ENCODE measurements at regions of chr9 and their contacts with region 1.

Region 1: DNA sequence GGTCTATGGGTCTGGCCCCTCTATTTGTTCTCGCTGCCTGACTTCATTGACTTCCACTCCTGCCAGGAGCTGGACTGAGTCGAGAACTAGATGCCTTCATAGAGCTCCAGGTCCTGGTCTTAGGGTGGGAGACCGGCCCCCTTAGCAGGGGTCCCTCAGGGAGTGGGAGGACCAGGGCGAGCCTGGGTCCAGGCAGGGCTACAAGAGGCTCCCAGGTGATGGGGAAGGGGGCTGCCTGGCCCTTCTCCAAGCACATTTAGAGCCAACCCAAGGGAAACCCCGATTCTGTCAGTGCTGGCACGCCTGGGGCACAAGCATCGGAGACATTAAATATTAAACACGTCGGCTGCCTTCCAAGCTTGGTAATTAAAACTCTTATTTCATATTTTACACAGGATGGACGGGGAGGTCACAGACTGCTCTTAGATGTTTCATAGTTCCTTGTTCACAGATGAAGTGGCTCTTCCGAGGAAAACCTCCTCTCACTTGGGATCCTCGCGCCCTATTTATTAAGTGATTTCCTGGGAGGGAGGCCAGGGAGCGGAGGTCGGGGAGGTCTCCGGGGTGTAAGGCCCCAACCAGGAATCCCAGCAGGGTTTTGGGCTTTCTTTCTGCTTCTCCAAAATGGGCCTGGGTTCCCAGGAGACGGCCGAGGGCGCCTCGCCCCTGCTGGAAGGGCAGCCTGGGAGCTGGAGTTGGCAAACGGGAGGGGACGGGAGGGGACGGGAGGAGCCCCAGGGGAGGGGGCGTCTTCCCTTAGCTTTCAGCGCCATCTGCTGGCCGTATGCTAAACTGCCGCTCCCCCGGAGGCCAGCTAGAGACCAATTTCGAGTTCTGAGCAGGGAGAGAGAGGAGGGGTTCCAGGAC is 23.4 kb upstream of the ZBTB43 start:
- DNase-seq: peak; percentile 85 to 96
- H3K4me3 ChIP-seq: no peak overlapping the region
- H3K4me1 ChIP-seq: peaks cover 3% of the 10 kb centered on the region; the same call in 1 of the 2 replicates
- H3K27me3 ChIP-seq: no peaks in the 10 kb centered on the region

Region 2: DNA sequence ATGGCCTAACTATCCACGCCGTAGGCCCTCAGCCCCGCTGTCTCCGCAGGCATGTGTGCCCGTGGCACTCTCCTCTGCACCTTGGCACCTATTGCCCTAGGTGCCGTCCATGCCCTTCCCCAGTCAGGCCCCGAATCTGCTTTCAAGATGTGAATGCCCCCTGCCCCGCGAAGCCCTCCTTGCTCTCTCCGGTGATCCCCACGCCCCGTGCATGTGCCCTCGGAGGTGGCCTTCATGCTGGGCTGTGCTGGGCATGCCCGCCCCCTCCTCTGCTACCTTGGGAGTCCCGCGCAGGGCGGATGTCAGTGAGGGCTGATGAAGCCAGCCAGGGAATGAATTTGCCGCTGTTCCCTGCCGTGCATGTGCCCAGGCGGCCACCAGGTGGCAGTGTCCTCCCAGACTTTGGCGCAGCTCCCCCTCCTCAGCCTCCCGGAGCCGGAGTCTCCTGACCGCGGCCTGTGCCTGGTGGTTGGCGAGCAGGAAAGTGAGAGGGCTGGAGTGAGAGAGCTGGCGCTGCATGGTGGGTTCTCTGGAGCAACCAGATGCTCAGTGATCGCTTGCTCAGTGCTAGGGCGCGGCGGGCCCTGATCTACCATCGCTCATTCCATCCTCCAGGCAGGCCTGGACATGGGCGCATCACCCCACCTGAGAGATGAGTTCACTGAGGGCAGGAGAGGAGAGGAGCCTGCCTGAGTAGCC is 280.6 kb before region 1 on chr9:
- in situ Hi-C with region 1: loop called (anchors 10 kb)
- DNase-seq: peak; percentile 70 to 89
- H3K4me3 ChIP-seq: no peak overlapping the region
- H3K4me1 ChIP-seq: 0 out of 2 replicates have a peak, but pooled peaks cover 2% of the 10 kb centered on the region
- H3K27me3 ChIP-seq: no peaks in the 10 kb centered on the region

Region 3: GRCh38 chr9:126611592-126612325 is 169.7 kb before region 1 on chr9:
- in situ Hi-C with region 1: loop called (anchors 10 kb)
- DNase-seq: peak; percentile 70 to 91
- H3K4me3 ChIP-seq: peak overlapping the region; percentile 23
- H3K4me1 ChIP-seq: peaks cover 8% of the 10 kb centered on the region
- H3K27me3 ChIP-seq: no peaks in the 10 kb centered on the region

Region 4: GRCh38 chr9:126704873-126705766 is 76.3 kb before region 1 on chr9:
- in situ Hi-C with region 1: loop called (anchors 5 kb)
- DNase-seq: peak; percentile 55 to 92
- H3K4me3 ChIP-seq: no peak overlapping the region
- H3K4me1 ChIP-seq: peaks cover 16% of the 10 kb centered on the region
- H3K27me3 ChIP-seq: no peaks in the 10 kb centered on the region